WTC11 (cell line): ENCODE measurements at regions of chr2 and their contacts with region 1.

Region 1: DNA sequence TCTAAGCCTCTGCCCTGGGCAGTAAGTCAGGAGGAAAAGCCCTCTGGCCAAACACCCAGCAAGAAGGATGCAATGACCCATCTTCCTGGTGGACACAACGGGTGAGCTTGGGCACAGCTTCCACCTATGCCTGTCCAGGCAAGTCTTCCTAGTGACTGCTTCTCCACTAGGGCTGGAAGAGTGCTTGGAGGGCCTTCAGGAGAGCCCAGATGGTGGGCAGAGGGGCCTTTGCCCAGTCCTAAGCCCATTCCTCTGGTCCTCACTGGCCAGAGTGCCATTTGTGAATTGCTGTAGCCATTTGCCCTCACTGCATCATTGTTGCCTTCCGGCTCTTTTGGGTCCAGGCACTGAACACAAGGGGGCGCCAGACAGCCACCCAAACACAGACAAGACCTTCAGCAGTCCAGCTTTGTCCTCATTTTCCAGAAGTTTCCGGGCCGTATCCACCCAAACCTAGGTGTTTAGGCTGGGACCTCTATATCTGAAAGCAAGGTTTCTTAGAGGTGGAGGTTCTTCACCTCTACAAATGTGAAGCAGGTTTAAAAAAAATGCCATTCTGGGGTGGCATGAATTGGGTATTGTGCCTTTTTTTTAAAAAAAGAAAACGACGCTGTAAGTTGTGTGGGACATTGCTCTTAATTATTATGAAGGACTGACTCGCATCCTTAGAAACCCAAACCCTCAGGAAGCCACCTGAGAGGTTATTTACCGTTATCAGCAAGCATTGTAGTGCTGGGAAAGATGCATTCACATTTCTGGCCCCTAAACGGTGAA is 29.5 kb downstream of the PAX8 start:
- DNase-seq: peak; percentile 81
- ATAC-seq: peak; percentile 89
- H3K4me3 Mint-ChIP-seq: no peak overlapping the region
- H3K27ac Mint-ChIP-seq: no peak overlapping the region
- H3K4me1 Mint-ChIP-seq: peaks cover 5% of the 10 kb centered on the region
- H3K27me3 Mint-ChIP-seq: peaks cover 6% of the 10 kb centered on the region
- CTCF ChIP-seq: peak; percentile 94

Region 2: GRCh38 chr2:113273027-113273551 is 23.9 kb after region 1 on chr2:
- CTCF ChIA-PET with region 1: interaction called, 15 read pairs
- POLR2A ChIA-PET with region 1: no interaction called
- DNase-seq: peak; percentile 70
- ATAC-seq: peak; percentile 88
- H3K4me3 Mint-ChIP-seq: peak overlapping the region; percentile 19
- H3K27ac Mint-ChIP-seq: no peak overlapping the region
- H3K4me1 Mint-ChIP-seq: peaks cover 33% of the 10 kb centered on the region
- H3K27me3 Mint-ChIP-seq: peaks cover 96% of the 10 kb centered on the region
- CTCF ChIP-seq: no peak